MCF 10A (cell line): ENCODE measurements at regions of chr12 and their contacts with region 1.

Region 1: GRCh38 chr12:48788854-48789796 is at the start of gene ADCY6:
- DNase-seq: peak; percentile 68
- H3K4me3 Mint-ChIP-seq: peak within 1 kb of the TSS; percentile 86
- H3K27ac Mint-ChIP-seq: peak within 1 kb of the TSS; percentile 95
- H3K4me1 Mint-ChIP-seq: peaks cover 22% of the 10 kb centered on the region
- H3K27me3 Mint-ChIP-seq: no peaks in the 10 kb centered on the region
- CTCF ChIP-seq: no peak
- total RNA-seq, gene ADCY6: 21.9 and 33.2 TPM in 2 replicates

Region 2: DNA sequence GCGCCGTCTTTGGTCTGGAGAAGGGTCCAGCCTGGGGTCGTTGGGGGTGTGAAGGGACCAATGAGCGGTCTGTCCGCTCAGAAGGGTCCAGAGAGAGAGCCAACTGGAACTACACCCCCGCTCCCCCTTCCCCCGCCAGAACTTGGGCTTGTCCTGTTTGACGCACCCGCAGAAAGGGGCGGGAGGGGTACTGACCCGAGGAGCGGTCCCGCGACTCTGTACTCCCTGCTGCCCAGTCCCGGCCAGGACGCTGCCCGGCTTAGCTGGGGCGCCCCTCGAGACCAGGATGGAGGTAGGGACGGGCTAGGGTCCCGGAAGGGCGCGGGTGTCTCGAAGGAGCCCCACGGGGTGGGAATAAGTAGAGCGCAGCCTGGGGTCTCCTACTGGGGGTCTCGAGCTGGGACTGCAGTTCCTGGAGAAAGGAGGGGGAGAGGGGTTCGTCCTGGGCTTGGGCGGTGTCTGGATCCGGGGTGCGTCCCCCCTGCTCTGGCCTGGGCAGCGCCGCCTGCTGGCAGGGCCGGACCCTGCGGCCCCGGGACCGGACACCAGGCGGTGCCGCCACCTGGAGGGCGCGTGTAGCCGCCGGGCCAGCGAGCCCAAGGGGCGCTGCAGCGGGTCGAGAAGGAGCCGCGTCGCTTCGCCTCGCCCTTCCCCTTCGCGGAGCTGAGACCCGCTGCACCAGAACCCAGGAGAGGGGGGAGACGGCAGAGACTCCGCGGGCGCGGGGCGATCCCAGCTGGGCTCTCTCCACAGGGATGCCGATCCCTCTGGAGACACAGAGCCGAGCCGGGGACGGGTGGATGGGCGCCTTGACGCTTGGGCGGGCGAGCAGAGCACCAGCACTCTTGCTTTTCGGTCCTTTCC is 25.4 kb after region 1 on chr12:
- CTCF ChIA-PET with region 1: interaction called, 28 read pairs
- POLR2A ChIA-PET with region 1: interaction called, 19 read pairs
- intact Hi-C with region 1: no loop called
- DNase-seq: peak; percentile 77
- H3K4me3 Mint-ChIP-seq: peak overlapping the region; percentile 85
- H3K27ac Mint-ChIP-seq: peak overlapping the region; percentile 75
- H3K4me1 Mint-ChIP-seq: peaks cover 24% of the 10 kb centered on the region
- H3K27me3 Mint-ChIP-seq: no peaks in the 10 kb centered on the region
- CTCF ChIP-seq: peak; percentile 97

Region 3: GRCh38 chr12:48890657-48891418 is 101.7 kb after region 1 on chr12:
- CTCF ChIA-PET with region 1: no interaction called
- POLR2A ChIA-PET with region 1: no interaction called
- intact Hi-C with region 1: no loop called
- DNase-seq: peak; percentile 76
- H3K4me3 Mint-ChIP-seq: no peak overlapping the region
- H3K27ac Mint-ChIP-seq: no peak overlapping the region
- H3K4me1 Mint-ChIP-seq: no peaks in the 10 kb centered on the region
- H3K27me3 Mint-ChIP-seq: peaks cover 20% of the 10 kb centered on the region
- CTCF ChIP-seq: peak; percentile 85